Ascending aorta (tissue), 2 donors: ENCODE measurements at regions of chr20 and their contacts with region 1.

Region 1: GRCh38 chr20:44137210-44137801 is 49.7 kb downstream of the JPH2 start:
- DNase-seq: peak in 1 of 2 donors; percentile 79
- H3K4me3 ChIP-seq: peak overlapping the region in 1 of 2 donors; percentile 28
- H3K27ac ChIP-seq: peak overlapping the region; percentile 92
- H3K4me1 ChIP-seq: peaks cover 8 to 30% of the 10 kb centered on the region in 2 donors
- H3K27me3 ChIP-seq: no peaks in the 10 kb centered on the region
- CTCF ChIP-seq: no peak

Region 2: DNA sequence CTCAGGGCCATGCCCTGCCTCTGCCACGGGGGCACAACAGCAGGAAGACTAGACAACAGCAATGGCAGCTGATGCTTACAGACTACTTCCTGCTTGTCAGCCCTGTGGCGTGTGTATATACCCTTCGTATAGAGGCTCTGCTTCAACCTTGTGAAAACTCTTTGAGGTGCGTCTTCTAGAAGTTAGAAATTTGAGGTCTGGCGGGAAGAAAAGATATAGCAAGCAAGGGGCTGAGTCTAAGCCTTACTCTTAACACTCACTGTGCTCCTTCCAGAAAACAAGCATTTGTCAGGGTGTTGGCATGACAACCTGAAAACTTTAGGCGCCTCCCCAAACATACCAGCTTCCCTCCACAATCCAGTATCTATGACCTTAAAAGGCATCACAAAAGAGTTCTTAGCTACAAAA is 16.3 kb after region 1 on chr20:
- intact Hi-C with region 1: loop called (anchors 1 kb)
- DNase-seq: peak in 1 of 2 donors; percentile 83
- H3K4me3 ChIP-seq: peak overlapping the region in 1 of 2 donors; percentile 34
- H3K27ac ChIP-seq: peak overlapping the region; percentile 94 to 95
- H3K4me1 ChIP-seq: peaks cover 23 to 56% of the 10 kb centered on the region in 2 donors
- H3K27me3 ChIP-seq: no peaks in the 10 kb centered on the region
- CTCF ChIP-seq: peak in 1 of 3 experiments; percentile 10

Region 3: GRCh38 chr20:44166477-44166876 is 29.2 kb after region 1 on chr20:
- intact Hi-C with region 1: no loop called
- DNase-seq: peak in 1 of 2 donors; percentile 89
- H3K4me3 ChIP-seq: peak overlapping the region; percentile 27 to 54
- H3K27ac ChIP-seq: peak overlapping the region; percentile 86 to 89
- H3K4me1 ChIP-seq: peaks cover 8 to 42% of the 10 kb centered on the region in 2 donors
- H3K27me3 ChIP-seq: no peaks in the 10 kb centered on the region
- CTCF ChIP-seq: no peak

Region 4: GRCh38 chr20:44204155-44204831 is 67.0 kb after region 1 on chr20:
- intact Hi-C with region 1: no loop called
- DNase-seq: no peak
- H3K4me3 ChIP-seq: no peak overlapping the region
- H3K27ac ChIP-seq: peak overlapping the region; percentile 63 to 66
- H3K4me1 ChIP-seq: peaks cover 4 to 41% of the 10 kb centered on the region in 2 donors
- H3K27me3 ChIP-seq: no peaks in the 10 kb centered on the region
- CTCF ChIP-seq: no peak

Region 5: DNA sequence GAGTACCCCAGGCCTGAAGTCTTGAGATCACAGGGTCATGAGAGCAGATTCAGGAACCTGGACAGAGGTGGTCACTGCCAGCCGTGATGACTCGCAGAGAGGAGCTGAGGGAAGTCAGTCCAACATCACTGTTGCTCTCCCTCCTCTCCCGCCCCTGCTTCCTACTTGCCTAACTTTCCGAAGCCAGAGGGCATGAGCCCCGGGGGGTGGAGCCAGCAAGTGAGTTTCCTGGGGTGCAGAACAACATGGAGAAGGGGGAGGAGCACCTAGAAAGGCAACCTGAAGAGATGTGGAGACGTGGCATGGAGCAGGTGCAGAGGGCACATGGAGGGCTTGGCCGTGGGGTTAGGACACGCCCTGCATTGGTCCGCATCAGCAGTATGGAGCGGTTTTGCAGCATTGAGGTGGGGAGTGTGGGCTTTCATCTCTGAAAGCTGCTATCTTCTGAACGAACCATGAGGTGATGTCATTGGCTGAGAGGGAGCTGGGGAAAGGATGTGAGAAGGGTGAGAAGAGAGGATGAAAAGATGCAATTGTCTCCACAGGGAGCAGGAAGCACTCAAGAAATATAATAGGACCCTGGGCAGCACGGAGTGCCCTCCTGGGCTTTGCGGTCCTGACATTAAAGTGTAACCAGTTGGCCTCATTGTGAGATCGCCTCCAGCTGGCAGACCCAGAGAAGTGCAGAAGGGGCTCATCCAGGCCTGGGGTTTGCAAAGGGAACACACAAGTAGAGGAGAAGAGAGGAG is 134.8 kb after region 1 on chr20:
- intact Hi-C with region 1: no loop called
- DNase-seq: no peak
- H3K4me3 ChIP-seq: no peak overlapping the region
- H3K27ac ChIP-seq: no peak overlapping the region
- H3K4me1 ChIP-seq: no peaks in the 10 kb centered on the region
- H3K27me3 ChIP-seq: no peaks in the 10 kb centered on the region
- CTCF ChIP-seq: no peak